ENCODE measurements at regions of chr1 and their contacts with region 1.

Region 1: DNA sequence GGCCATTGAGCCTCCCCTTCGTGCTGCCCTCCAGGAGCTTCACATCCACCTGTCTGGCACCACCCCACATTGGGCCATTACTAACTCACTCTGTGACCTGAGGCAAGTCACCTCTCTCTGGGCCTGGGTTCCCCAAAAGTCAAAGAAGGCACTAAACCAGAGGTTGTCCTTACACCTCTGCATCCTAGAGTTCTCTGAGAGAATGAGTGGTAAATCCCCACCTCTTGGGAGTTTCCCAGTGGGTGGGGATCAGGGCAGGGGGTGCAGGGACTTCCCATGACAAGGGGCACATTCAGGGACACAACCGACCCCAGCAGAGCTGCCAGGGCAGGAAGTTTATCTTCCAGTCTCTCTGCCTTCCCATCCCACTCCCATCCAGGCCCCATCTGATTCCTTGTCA is 99.7 kb downstream of the EPHB2 start:
- DNase-seq: no peak
- H3K4me3 ChIP-seq: no peak overlapping the region
- H3K27ac ChIP-seq: no peak overlapping the region
- H3K4me1 ChIP-seq: peaks cover 12% of the 10 kb centered on the region
- H3K27me3 ChIP-seq: no peaks in the 10 kb centered on the region
- CTCF ChIP-seq: no peak
- POLR2A ChIP-seq: no peak

Region 2: DNA sequence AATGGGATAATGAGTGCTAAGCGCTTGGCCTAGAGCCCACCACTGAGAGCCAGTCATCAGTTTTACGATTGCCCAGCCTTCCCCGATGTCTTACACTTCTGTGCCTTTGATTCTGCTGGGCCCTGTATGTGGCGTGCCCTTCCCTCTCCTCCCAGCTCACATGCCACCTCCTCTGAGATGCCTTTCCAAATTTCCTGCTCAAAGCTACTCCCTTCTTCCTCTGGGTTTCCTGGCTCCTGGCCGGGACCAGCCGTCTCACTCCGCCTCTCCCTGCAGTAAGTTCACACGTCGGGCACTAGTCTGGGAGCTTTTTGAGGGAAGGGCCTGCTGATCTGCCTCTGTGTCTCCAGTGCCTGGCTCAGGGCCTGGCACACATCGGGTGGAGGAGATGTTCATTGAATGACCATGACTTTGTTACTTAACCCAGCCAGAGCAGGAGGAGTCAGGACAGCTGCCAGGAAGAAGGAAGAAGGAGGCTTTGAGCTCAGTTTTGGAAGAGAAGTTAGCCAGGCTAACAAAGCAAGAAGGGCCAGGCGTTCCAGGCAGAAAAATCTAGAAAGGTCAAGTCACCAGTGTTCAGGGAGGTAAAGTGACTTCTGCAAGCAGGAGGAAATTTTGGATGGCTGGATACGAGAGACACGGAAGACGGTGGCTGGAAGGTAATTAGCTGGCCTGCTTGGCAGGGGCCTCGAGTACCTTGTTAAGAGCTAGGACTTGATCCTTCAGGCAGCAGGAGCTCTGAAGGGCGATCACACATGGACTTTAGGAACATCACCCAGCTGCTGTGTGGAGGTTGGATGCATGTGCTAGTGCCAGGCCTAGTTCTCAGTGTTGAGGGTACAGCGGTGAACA is 36.2 kb before region 1 on chr1:
- intact Hi-C with region 1: loop called (anchors 2 kb)
- DNase-seq: peak; percentile 33
- H3K4me3 ChIP-seq: no peak overlapping the region
- H3K27ac ChIP-seq: peak overlapping the region in 1 of 2 donors; percentile 14
- H3K4me1 ChIP-seq: peaks cover 7% of the 10 kb centered on the region
- H3K27me3 ChIP-seq: no peaks in the 10 kb centered on the region
- CTCF ChIP-seq: no peak
- POLR2A ChIP-seq: no peak

Region 3: GRCh38 chr1:22903113-22903512 is 92.7 kb after region 1 on chr1:
- intact Hi-C with region 1: no loop called
- DNase-seq: no peak
- H3K4me3 ChIP-seq: no peak overlapping the region
- H3K27ac ChIP-seq: no peak overlapping the region
- H3K4me1 ChIP-seq: no peaks in the 10 kb centered on the region
- H3K27me3 ChIP-seq: no peaks in the 10 kb centered on the region
- CTCF ChIP-seq: no peak
- POLR2A ChIP-seq: no peak

Region 4: DNA sequence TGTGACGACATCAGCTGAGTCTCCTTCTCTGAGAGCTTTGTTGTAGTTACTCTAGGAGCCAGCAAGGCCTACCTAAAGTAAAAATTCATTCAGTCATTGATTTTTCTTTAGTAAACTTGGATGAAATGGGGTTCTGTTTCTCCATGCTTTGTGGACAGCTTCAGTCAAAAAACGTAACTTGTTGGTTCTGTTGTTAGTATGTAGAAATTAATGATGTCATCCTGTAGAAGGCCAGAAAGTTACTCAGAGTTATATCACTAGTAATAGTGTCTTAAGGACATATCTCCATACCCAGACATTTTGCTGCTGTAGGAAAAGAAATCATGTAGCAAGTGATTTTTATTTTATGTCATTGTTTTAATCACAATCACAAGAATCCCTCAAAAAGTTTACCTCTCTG is 251.9 kb after region 1 on chr1:
- intact Hi-C with region 1: no loop called
- DNase-seq: no peak
- H3K4me3 ChIP-seq: no peak overlapping the region
- H3K27ac ChIP-seq: no peak overlapping the region
- H3K4me1 ChIP-seq: no peaks in the 10 kb centered on the region
- H3K27me3 ChIP-seq: no peaks in the 10 kb centered on the region
- CTCF ChIP-seq: no peak
- POLR2A ChIP-seq: no peak

Region 5: DNA sequence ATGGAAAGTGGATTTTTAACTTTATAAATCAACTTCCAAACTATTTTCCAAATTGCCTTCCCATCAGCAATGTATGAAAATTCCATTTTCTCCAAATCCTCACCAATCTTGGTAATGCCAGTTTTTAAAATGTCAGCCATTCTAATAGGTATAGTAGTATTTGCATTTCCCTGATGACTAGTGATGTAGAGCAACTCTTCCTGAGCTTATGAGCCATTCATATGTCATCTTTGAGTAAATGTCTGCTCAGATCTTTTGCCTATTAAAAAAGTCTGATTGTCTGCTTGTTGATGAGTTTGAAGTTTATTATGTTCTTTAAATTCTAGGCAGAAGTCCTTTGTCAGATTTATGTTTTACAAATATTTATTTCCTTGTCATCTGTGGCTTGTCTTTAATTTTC is 263.6 kb after region 1 on chr1:
- intact Hi-C with region 1: no loop called
- DNase-seq: no peak
- H3K4me3 ChIP-seq: no peak overlapping the region
- H3K27ac ChIP-seq: no peak overlapping the region
- H3K4me1 ChIP-seq: no peaks in the 10 kb centered on the region
- H3K27me3 ChIP-seq: no peaks in the 10 kb centered on the region
- CTCF ChIP-seq: no peak
- POLR2A ChIP-seq: no peak

Measured in prostate gland (tissue), 2 donors.